RWPE1 (cell line): ENCODE measurements at regions of chr5 and their contacts with region 1.

Region 1: GRCh38 chr5:152142840-152143469 is 218.3 kb upstream of the GLRA1 start:
- DNase-seq: peak; percentile 78
- H3K27ac ChIP-seq: no peak overlapping the region
- CTCF ChIP-seq: peak; percentile 95

Region 2: DNA sequence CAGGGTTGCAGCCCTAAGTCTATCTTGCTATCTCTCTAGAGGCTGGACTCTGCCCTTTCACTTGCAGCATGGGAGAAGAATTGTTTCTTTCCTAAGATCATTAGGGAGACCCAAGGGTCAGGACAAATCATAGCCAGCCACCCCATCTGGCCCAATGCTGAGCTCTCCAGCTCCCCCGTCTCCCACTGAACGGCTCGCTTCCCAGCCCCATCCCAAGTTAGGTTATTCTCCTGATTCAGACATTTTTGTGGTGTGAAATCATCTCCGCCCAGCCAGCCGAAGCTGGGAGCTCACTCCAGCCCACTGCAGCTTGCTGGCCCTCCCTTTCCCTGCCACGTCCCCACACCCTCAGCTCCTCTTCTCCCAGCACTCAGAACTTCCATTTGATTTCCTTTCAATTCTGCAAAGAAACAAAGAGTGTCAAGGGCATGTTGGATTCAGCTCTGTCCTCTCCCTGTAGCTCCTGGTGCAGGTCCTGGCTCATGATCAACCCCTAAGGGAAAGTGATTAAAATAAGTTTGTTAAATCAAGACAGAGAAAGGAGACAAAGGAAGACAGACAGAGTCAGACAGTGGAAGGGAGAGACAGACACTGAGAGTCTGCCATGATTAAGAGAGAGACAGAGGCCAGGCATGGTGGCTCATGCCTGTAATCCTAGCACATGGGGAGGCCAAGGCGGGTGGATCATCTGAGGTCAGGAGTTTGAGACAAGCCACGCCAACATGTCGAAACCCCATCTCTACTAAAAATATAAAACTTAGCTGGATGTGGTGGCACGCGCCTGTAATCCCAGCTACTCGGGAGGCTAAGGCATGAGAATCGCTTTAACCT is 443.7 kb before region 1 on chr5:
- CTCF ChIA-PET with region 1: no interaction called
- POLR2A ChIA-PET with region 1: no interaction called
- DNase-seq: peak; percentile 88
- H3K27ac ChIP-seq: peak overlapping the region; percentile 91
- CTCF ChIP-seq: no peak

Region 3: GRCh38 chr5:151819830-151820229 is 323.1 kb before region 1 on chr5:
- CTCF ChIA-PET with region 1: interaction called, 45 read pairs
- POLR2A ChIA-PET with region 1: no interaction called
- DNase-seq: no peak
- H3K27ac ChIP-seq: no peak overlapping the region
- CTCF ChIP-seq: no peak

Region 4: GRCh38 chr5:151825445-151825844 is 317.5 kb before region 1 on chr5:
- CTCF ChIA-PET with region 1: interaction called, 45 read pairs
- POLR2A ChIA-PET with region 1: no interaction called
- DNase-seq: peak; percentile 77
- H3K27ac ChIP-seq: no peak overlapping the region
- CTCF ChIP-seq: peak; percentile 88

Region 5: GRCh38 chr5:151924564-151925301 is 218.2 kb before region 1 on chr5 and contains the start of gene GLRA1:
- CTCF ChIA-PET with region 1: no interaction called
- POLR2A ChIA-PET with region 1: no interaction called
- DNase-seq: peak; percentile 77
- H3K27ac ChIP-seq: no peak within 1 kb of the TSS
- CTCF ChIP-seq: no peak

Region 6: GRCh38 chr5:152349683-152350526 is 206.9 kb after region 1 on chr5:
- CTCF ChIA-PET with region 1: interaction called, 11 read pairs
- POLR2A ChIA-PET with region 1: no interaction called
- DNase-seq: peak; percentile 49
- H3K27ac ChIP-seq: no peak overlapping the region
- CTCF ChIP-seq: peak; percentile 88

Region 7: DNA sequence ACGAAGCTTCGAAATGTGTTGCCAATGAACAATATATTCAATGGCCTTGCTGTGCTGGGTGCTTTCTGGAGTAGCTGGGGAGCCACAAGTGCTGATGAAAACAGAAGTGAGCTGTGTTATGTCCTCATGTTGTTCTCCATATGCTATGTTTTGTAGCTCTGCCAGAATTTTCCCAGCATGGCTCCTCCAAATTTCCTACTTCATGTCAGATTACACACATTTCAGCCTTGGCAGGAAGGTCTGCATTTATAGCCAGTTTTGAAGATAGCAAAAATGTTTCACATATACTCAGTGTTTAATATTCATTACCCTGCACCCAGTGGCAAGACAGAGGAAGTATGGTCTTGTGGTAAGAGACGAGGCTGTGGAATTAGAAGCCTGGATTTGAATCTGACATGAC is 284.8 kb after region 1 on chr5:
- CTCF ChIA-PET with region 1: no interaction called
- POLR2A ChIA-PET with region 1: no interaction called
- DNase-seq: no peak
- H3K27ac ChIP-seq: no peak overlapping the region
- CTCF ChIP-seq: no peak